WTC11 (cell line): ENCODE measurements at regions of chr17 and their contacts with region 1.

Region 1: DNA sequence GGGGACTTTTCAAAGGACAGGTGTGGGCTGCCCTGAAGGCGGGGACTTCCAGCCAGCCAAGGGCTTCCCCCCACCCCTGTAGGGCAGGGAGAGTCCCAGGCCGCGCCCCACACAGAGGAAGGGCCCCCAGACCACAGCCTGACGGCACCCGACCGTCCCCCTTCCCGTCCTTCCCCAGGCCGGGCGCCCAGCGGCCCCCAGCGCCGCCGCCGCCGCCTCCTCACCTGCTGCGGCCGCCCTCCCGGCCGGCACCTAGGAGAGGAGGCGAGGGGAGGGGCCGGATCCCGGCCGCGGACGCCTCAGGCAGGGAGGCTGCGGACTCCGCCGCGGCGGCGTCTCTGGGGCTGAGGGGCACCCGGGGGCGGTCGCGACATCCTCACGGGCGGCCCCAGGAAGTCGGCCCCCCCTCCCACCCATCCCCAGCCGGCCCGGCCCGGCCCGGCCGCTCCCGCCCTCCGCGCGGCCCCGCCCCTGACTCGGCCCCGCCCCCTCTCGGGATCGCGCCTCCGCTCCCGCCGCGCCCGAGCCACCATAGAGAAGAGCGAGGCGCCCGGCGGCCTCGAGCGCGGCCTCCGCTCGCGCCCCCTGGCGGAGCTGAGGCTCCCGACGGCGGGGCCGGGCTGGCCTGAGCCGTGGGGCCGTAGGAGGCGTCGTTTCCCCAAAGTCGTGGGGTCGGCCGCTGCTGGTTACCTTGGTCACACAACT is 25.5 kb upstream of the RFFL start:
- DNase-seq: peak; percentile 85
- ATAC-seq: peak; percentile 85
- H3K4me3 Mint-ChIP-seq: peak overlapping the region; percentile 87
- H3K27ac Mint-ChIP-seq: no peak overlapping the region
- H3K4me1 Mint-ChIP-seq: peaks cover 43% of the 10 kb centered on the region
- H3K27me3 Mint-ChIP-seq: peaks cover 4% of the 10 kb centered on the region
- CTCF ChIP-seq: peak; percentile 68

Region 2: DNA sequence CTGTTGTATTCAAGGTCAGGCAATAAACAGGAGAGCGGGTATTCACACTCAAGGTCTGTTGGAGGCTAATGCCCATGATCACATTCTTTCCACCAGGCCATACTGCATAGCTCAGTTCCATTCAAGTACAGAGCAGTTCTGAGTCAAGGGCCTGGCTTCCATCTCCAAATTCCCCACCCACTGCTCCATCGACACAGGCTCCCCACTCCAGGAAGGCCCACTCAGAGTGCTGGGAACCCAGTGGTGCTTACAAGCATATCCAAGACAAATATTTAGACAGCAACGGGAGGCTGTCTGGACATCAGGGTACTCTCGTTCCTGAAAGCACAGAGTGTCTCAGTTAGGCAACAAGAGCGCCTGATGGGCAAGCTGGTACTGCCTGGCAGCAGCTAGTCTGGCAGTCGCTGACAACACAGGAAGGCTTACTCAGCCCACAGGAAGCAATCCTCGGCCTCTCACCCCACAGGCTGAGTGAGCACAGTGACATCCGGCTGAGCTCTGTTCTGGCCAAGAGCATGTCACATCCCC is 66.4 kb before region 1 on chr17:
- CTCF ChIA-PET with region 1: interaction called, 10 read pairs
- POLR2A ChIA-PET with region 1: no interaction called
- DNase-seq: no peak
- ATAC-seq: peak; percentile 36; the same call in 1 of the 2 replicates
- H3K4me3 Mint-ChIP-seq: no peak overlapping the region
- H3K27ac Mint-ChIP-seq: no peak overlapping the region
- H3K4me1 Mint-ChIP-seq: no peaks in the 10 kb centered on the region
- H3K27me3 Mint-ChIP-seq: no peaks in the 10 kb centered on the region
- CTCF ChIP-seq: no peak

Region 3: GRCh38 chr17:35063514-35064223 is 25.4 kb before region 1 on chr17 and contains the start of gene RFFL:
- CTCF ChIA-PET with region 1: interaction called, 15 read pairs
- POLR2A ChIA-PET with region 1: interaction called, 6 read pairs
- DNase-seq: peak; percentile 78
- ATAC-seq: peak; percentile 94
- H3K4me3 Mint-ChIP-seq: peak within 1 kb of the TSS; percentile 50
- H3K27ac Mint-ChIP-seq: peak within 1 kb of the TSS; percentile 99
- H3K4me1 Mint-ChIP-seq: peaks cover 45% of the 10 kb centered on the region
- H3K27me3 Mint-ChIP-seq: no peaks in the 10 kb centered on the region
- CTCF ChIP-seq: no peak
- total RNA-seq, gene RFFL: 26.6 to 30.3 TPM (median 27.8 TPM) in 3 replicates

Region 4: DNA sequence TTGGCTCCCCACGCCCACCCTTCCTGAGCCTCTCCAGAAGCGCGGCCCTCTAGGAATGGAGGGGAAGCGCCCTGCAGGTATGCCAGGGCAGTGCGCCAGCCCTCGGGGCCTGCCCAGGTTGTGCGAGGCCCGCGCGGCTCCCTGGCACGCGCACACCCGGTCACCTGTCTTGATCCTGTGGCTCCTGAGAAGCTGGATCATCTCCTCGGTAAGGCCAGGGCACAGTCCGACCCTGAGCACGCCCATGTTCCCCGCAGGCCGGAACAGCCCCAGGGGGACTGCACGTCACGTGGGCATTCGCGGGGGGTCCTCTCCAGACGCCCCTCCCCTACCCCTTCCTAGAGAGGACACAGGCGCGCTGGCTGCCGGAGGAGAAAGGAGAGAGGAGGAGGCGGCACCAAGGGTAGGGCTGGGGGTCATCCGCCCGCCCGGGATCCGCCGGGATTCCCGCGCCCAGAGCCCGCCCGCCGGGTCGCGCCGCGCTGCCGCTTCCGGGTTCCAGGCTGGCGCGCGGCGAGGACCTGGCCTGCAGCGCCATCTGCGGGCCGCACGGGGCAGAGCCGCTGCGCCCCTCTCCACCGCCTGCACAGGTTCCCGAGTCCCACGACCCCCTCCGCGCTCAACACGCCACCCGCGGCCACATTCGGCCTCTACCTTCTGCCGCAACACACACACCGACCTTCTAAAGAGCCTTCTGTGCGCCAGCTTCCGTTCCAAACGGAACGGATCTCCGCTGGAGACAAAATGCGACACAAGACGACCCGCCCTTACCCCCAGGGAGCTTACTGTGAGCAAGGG is 30.5 kb after region 1 on chr17 and contains the start of gene RAD51D:
- CTCF ChIA-PET with region 1: interaction called, 27 read pairs
- POLR2A ChIA-PET with region 1: no interaction called
- DNase-seq: peak; percentile 82
- ATAC-seq: peak; percentile 90
- H3K4me3 Mint-ChIP-seq: peak within 1 kb of the TSS; percentile 87
- H3K27ac Mint-ChIP-seq: no peak within 1 kb of the TSS
- H3K4me1 Mint-ChIP-seq: peaks cover 17% of the 10 kb centered on the region
- H3K27me3 Mint-ChIP-seq: peaks cover 29% of the 10 kb centered on the region
- CTCF ChIP-seq: peak; percentile 90
- total RNA-seq, gene RAD51D: 13.8 to 15.7 TPM (median 15.0 TPM) in 3 replicates

Region 5: DNA sequence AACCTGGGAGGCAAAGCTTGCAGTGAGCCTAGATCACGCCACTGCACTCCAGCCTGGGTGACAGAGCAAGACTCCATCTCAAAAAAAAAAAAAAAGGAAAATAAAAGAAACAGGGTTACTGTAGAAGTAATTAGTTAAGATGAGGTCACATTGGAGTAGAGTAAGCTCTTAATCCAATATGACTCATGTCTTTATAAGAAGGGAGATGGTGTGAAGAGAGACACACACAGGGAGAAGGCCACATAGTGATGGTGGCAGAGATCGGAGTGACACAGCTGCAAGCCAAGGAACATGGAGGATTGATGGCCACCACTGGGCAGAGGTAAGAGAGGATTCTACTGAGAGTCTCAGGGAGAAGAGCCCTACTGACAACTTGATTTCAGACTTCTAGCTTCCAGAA is 138.5 kb after region 1 on chr17:
- CTCF ChIA-PET with region 1: no interaction called
- POLR2A ChIA-PET with region 1: no interaction called
- DNase-seq: no peak
- ATAC-seq: no peak
- H3K4me3 Mint-ChIP-seq: no peak overlapping the region
- H3K27ac Mint-ChIP-seq: no peak overlapping the region
- H3K4me1 Mint-ChIP-seq: no peaks in the 10 kb centered on the region
- H3K27me3 Mint-ChIP-seq: peaks cover 7% of the 10 kb centered on the region
- CTCF ChIP-seq: no peak

Region 6: GRCh38 chr17:35315283-35315682 is 226.2 kb after region 1 on chr17:
- CTCF ChIA-PET with region 1: no interaction called
- POLR2A ChIA-PET with region 1: no interaction called
- DNase-seq: no peak
- ATAC-seq: no peak
- H3K4me3 Mint-ChIP-seq: no peak overlapping the region
- H3K27ac Mint-ChIP-seq: peak overlapping the region; percentile 47; the same call in 1 of the 2 replicates
- H3K4me1 Mint-ChIP-seq: peaks cover 34% of the 10 kb centered on the region
- H3K27me3 Mint-ChIP-seq: peaks cover 37% of the 10 kb centered on the region
- CTCF ChIP-seq: no peak